Motor neuron (in vitro differentiated cells): ENCODE measurements at regions of chr1 and their contacts with region 1.

Region 1: DNA sequence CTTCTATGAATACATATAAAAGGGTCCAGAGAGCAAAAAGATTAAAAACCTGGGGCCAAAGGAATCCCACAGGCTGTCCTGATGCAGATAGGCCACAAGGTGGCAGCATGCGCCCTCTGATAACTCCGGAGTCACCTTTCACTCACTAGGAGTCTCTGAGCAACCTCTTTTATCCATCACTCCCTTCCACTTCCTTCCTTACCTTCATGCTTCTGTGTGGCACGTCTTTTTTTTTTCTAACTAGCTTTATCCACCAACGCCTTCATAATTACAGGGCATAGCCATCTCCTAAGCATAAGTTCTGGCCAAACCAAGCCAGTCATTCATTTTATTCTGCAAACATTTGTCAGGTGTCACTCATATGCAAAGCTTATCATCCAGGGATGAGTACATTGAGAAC is 3.9 kb upstream of the PGLYRP4 start:
- ATAC-seq: peak; percentile 59 to 91 (median 78)
- H3K4me3 ChIP-seq: no peak overlapping the region
- H3K27ac ChIP-seq: no peak overlapping the region
- H3K4me1 ChIP-seq: no peaks in the 10 kb centered on the region

Region 2: DNA sequence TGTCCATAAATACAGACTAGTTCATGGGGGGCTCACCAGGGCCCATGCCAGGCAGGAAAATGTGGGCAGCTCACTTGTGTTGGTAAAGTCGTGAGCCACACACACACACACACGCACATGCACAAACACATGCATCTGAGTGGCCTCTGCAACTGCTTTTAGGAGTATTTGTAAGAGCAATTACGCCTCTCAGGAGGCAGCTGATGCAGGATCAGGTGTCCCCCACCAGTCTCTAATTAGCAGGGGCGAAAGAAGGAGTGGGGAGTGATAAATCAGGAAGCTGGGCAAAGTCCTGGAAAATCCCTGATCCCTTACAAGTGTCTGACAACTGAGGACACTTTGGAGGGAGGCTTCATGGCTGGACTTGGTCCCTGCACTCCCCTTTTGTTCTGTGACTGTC is 449.9 kb before region 1 on chr1:
- in situ Hi-C with region 1: no loop called
- ATAC-seq: no peak
- H3K4me3 ChIP-seq: no peak overlapping the region
- H3K27ac ChIP-seq: no peak overlapping the region
- H3K4me1 ChIP-seq: no peaks in the 10 kb centered on the region

Region 3: GRCh38 chr1:153210206-153210605 is 142.3 kb before region 1 on chr1:
- in situ Hi-C with region 1: no loop called
- ATAC-seq: no peak
- H3K4me3 ChIP-seq: no peak overlapping the region
- H3K27ac ChIP-seq: no peak overlapping the region
- H3K4me1 ChIP-seq: no peaks in the 10 kb centered on the region

Region 4: GRCh38 chr1:153494976-153495535 is 142.5 kb after region 1 on chr1:
- in situ Hi-C with region 1: loop called in 4 of 9 experiments (anchors 10 to 25 kb)
- ATAC-seq: peak; percentile 38 to 95 (median 78)
- H3K4me3 ChIP-seq: no peak overlapping the region
- H3K27ac ChIP-seq: no peak overlapping the region
- H3K4me1 ChIP-seq: peaks cover 0 to 9% of the 10 kb centered on the region in 2 donors